ENCODE measurements at regions of chr7 and their contacts with region 1.

Region 1: GRCh38 chr7:992709-993607 is 10.0 kb downstream of the CYP2W1 start:
- DNase-seq: peak; percentile 93
- ATAC-seq: peak; percentile 92
- H3K4me3 ChIP-seq: no peak overlapping the region
- H3K27ac ChIP-seq: no peak overlapping the region
- H3K4me1 ChIP-seq: no peaks in the 10 kb centered on the region
- H3K27me3 ChIP-seq: no peaks in the 10 kb centered on the region
- CTCF ChIP-seq: peak; percentile 98

Region 2: GRCh38 chr7:908159-908581 is 84.8 kb before region 1 on chr7:
- CTCF ChIA-PET with region 1: no interaction called
- POLR2A ChIA-PET with region 1: interaction called, 17 read pairs
- intact Hi-C with region 1: no loop called
- DNase-seq: no peak
- ATAC-seq: no peak
- H3K4me3 ChIP-seq: no peak overlapping the region
- H3K27ac ChIP-seq: no peak overlapping the region
- H3K4me1 ChIP-seq: peaks cover 7% of the 10 kb centered on the region; the same call in 1 of the 2 replicates
- H3K27me3 ChIP-seq: peaks cover 4% of the 10 kb centered on the region; the same call in 1 of the 2 replicates
- CTCF ChIP-seq: no peak

Region 3: DNA sequence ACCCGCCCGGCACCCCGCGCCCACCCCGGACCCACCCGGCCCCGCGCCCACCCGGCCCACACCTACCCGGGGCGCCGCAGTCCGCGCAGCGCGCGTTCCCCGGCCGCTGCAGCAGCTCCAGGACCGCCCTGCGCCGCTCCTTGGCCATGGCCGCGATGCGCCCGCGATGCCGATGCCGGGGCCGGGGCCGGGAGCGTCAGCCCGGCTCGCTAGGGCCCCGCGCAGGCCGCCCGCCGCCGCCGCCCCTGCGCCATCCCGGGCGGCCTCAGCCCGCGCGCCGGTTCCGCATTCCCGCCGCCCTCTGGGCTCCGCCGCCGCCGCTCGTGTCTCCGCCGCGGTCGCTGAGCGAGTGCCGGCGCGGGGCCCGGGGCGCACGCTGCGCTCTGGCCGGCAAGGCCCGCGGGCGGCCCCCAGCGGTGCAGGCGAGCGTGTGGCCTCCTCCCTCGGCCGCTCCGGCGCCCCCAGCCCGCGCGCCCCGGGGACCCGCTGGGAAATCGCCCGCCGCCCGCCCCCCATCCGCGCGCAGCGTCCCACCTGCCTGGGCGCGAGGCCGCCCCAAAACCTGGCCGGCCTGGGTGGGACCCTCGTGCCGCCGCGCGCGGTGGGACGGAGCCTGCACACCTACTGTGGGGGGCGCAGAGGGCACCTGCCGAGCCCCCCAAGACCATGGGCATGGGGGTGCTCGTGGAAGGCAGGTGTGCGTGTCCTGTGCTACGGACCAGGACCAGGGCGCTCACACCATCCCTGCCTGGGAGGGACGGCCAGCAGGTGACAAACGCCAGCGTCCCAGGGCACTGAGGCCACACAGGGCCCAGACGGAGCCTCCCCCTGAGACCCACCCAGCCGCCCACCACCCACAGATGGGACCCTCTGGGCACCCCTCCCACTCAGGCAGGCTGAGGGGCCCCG is 38.4 kb before region 1 on chr7 and contains the start of gene ADAP1:
- CTCF ChIA-PET with region 1: no interaction called
- POLR2A ChIA-PET with region 1: no interaction called
- intact Hi-C with region 1: no loop called
- DNase-seq: peak; percentile 62
- ATAC-seq: peak; percentile 56
- H3K4me3 ChIP-seq: peak within 1 kb of the TSS; percentile 74
- H3K27ac ChIP-seq: no peak within 1 kb of the TSS
- H3K4me1 ChIP-seq: peaks cover 12% of the 10 kb centered on the region
- H3K27me3 ChIP-seq: no peaks in the 10 kb centered on the region
- CTCF ChIP-seq: no peak
- total RNA-seq, gene ADAP1: 31.2 and 36.4 TPM in 2 replicates

Region 4: DNA sequence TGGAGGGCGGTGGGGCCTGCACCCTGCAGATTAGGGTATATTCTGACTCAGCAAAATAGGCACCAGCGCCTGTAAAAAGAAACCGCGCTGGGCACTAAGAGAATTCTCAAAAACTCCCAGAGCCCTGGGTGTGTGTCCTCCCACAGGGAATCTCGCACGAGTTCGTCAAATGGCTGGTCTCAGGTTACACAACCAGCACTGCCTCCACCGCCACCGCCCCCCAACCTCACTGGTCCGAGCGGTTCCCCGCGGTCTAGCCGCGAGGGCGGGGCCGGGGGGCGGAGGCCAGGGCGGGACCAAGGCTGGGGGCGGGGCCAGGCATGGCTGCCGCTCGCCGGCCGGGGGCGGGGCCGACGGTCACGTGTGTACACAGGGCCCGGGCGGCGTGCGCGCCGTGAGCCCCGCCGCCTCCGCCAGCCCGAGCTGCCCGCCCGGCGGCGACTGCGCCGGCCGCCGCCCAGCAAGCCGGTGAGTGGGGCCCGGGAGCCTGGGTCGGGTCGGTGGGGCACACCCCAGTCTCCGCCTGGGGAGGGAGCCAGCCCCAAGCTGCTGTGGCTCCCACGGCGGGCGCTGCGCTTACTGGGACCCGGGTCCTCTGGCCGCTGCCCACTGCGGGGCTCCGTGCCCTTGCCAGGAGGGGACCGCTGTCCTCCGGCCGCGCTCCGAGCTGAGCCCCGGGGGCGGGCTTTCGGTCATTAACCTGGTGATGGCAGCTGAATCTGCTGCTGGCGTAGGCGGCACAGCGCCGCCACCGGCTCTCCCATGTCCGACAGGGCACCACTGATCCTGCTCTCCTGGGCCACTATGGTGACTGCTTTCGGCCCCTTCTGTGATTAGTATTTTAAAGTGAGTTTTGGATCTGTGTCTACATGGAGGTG is 51.5 kb after region 1 on chr7 and contains the start of gene GPR146:
- CTCF ChIA-PET with region 1: interaction called, 12 read pairs
- POLR2A ChIA-PET with region 1: no interaction called
- intact Hi-C with region 1: loop called (anchors 5 kb)
- DNase-seq: peak; percentile 95
- ATAC-seq: peak; percentile 91
- H3K4me3 ChIP-seq: peak within 1 kb of the TSS; percentile 88
- H3K27ac ChIP-seq: peak within 1 kb of the TSS; percentile 93
- H3K4me1 ChIP-seq: peaks cover 30% of the 10 kb centered on the region
- H3K27me3 ChIP-seq: no peaks in the 10 kb centered on the region
- CTCF ChIP-seq: peak; percentile 69
- total RNA-seq, gene GPR146: 2.0 and 2.7 TPM in 2 replicates

Region 5: GRCh38 chr7:1065263-1066260 is 72.6 kb after region 1 on chr7:
- CTCF ChIA-PET with region 1: interaction called, 31 read pairs
- POLR2A ChIA-PET with region 1: no interaction called
- intact Hi-C with region 1: loop called (anchors 1 kb)
- DNase-seq: peak; percentile 62
- ATAC-seq: peak; percentile 97
- H3K4me3 ChIP-seq: no peak overlapping the region
- H3K27ac ChIP-seq: no peak overlapping the region
- H3K4me1 ChIP-seq: no peaks in the 10 kb centered on the region
- H3K27me3 ChIP-seq: no peaks in the 10 kb centered on the region
- CTCF ChIP-seq: peak; percentile 71

Region 6: GRCh38 chr7:1103009-1103788 is 110.2 kb after region 1 on chr7:
- CTCF ChIA-PET with region 1: no interaction called
- POLR2A ChIA-PET with region 1: no interaction called
- intact Hi-C with region 1: no loop called
- DNase-seq: no peak
- ATAC-seq: no peak
- H3K4me3 ChIP-seq: no peak overlapping the region
- H3K27ac ChIP-seq: no peak overlapping the region
- H3K4me1 ChIP-seq: no peaks in the 10 kb centered on the region
- H3K27me3 ChIP-seq: no peaks in the 10 kb centered on the region
- CTCF ChIP-seq: no peak

Region 7: GRCh38 chr7:1144269-1144771 is 151.4 kb after region 1 on chr7:
- CTCF ChIA-PET with region 1: interaction called, 7 read pairs
- POLR2A ChIA-PET with region 1: no interaction called
- intact Hi-C with region 1: loop called (anchors 2 kb)
- DNase-seq: peak; percentile 54
- ATAC-seq: peak; percentile 96
- H3K4me3 ChIP-seq: no peak overlapping the region
- H3K27ac ChIP-seq: no peak overlapping the region
- H3K4me1 ChIP-seq: no peaks in the 10 kb centered on the region
- H3K27me3 ChIP-seq: no peaks in the 10 kb centered on the region
- CTCF ChIP-seq: peak; percentile 48

Region 8: DNA sequence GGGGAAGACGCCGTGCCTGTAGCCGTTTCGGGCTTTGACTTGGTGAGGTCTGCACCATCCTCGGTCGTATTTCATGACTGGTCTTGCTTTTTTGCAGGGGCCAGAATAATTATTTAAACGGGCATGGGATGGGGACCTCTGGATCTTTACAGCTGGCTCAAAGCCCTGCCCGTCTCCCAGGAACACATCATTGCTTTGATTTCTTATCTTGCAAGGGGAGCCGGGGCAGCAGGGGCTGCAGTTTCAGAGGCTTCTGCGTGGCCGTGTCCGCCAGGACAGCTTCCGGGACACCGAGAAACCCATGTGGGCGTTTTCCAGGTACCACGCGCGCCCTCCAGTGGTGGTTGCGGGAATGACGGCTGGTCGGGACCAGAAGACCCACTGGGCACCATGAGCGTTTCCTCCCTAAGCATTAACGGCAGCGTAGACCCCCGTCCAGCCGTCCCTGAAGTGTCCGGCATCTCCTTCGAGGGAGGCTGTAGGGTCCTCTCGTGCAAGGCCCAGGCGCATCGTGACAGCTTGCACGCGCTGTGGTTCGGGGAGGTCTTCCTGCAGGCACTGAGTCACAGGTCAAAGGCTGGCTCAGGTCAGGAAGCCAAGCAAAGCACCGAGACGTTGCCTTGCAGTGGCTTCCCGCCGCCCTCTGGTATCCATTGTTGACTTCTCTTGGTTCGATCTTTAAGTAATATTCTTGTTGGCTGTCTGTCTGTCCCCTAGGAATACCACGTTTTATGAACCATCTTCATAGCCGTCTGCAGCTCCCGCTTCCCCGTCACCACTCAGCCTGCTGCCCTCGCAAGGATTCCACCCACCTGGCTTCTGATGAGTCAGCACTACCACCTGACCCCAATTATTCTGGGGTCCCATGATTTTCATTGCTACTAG is 183.3 kb after region 1 on chr7:
- CTCF ChIA-PET with region 1: interaction called, 7 read pairs
- POLR2A ChIA-PET with region 1: no interaction called
- intact Hi-C with region 1: loop called (anchors 2 kb)
- DNase-seq: peak; percentile 88
- ATAC-seq: peak; percentile 89
- H3K4me3 ChIP-seq: peak overlapping the region; percentile 59
- H3K27ac ChIP-seq: no peak overlapping the region
- H3K4me1 ChIP-seq: peaks cover 7% of the 10 kb centered on the region; the same call in 1 of the 2 replicates
- H3K27me3 ChIP-seq: no peaks in the 10 kb centered on the region
- CTCF ChIP-seq: peak; percentile 85